ENCODE measurements at regions of chr6 and their contacts with region 1.

Region 1: GRCh38 chr6:35139908-35140655 is 1.1 kb downstream of the TCP11 start:
- DNase-seq: peak in 8 of 9 experiments; percentile 29 to 80 (median 50)
- ATAC-seq: no peak
- H3K4me3 ChIP-seq: no peak overlapping the region
- H3K4me3 Mint-ChIP-seq: peak overlapping the region; percentile 4
- H3K27ac ChIP-seq: no peak overlapping the region
- H3K27ac Mint-ChIP-seq: no peak overlapping the region
- H3K4me1 ChIP-seq: peaks cover 7% of the 10 kb centered on the region
- H3K4me1 Mint-ChIP-seq: peaks cover 11% of the 10 kb centered on the region
- H3K27me3 ChIP-seq: peaks cover 5 to 9% of the 10 kb centered on the region in 2 experiments
- H3K27me3 Mint-ChIP-seq: peaks cover 19% of the 10 kb centered on the region
- CTCF ChIP-seq: peak; percentile 92

Region 2: GRCh38 chr6:34161857-34162515 is 978.1 kb before region 1 on chr6:
- CTCF ChIA-PET with region 1: interaction called, 3 read pairs
- POLR2A ChIA-PET with region 1: no interaction called
- intact Hi-C with region 1: loop called (anchors 2 to 5 kb)
- DNase-seq: no peak
- ATAC-seq: no peak
- H3K4me3 ChIP-seq: no peak overlapping the region
- H3K4me3 Mint-ChIP-seq: no peak overlapping the region
- H3K27ac ChIP-seq: no peak overlapping the region
- H3K27ac Mint-ChIP-seq: no peak overlapping the region
- H3K4me1 ChIP-seq: no peaks in the 10 kb centered on the region
- H3K4me1 Mint-ChIP-seq: no peaks in the 10 kb centered on the region
- H3K27me3 ChIP-seq: no peaks in the 10 kb centered on the region
- H3K27me3 Mint-ChIP-seq: peaks cover 2% of the 10 kb centered on the region
- CTCF ChIP-seq: no peak

Region 3: GRCh38 chr6:34459899-34460593 is 680.0 kb before region 1 on chr6:
- CTCF ChIA-PET with region 1: interaction called, 23 read pairs
- POLR2A ChIA-PET with region 1: no interaction called
- intact Hi-C with region 1: loop called (anchors 1 kb)
- DNase-seq: peak; percentile 12 to 75 (median 48)
- ATAC-seq: peak; percentile 79
- H3K4me3 ChIP-seq: no peak overlapping the region
- H3K4me3 Mint-ChIP-seq: no peak overlapping the region
- H3K27ac ChIP-seq: no peak overlapping the region
- H3K27ac Mint-ChIP-seq: no peak overlapping the region
- H3K4me1 ChIP-seq: no peaks in the 10 kb centered on the region
- H3K4me1 Mint-ChIP-seq: peaks cover 1% of the 10 kb centered on the region
- H3K27me3 ChIP-seq: peaks cover 0 to 7% of the 10 kb centered on the region in 2 experiments
- H3K27me3 Mint-ChIP-seq: peaks cover 10% of the 10 kb centered on the region
- CTCF ChIP-seq: peak; percentile 63

Region 4: DNA sequence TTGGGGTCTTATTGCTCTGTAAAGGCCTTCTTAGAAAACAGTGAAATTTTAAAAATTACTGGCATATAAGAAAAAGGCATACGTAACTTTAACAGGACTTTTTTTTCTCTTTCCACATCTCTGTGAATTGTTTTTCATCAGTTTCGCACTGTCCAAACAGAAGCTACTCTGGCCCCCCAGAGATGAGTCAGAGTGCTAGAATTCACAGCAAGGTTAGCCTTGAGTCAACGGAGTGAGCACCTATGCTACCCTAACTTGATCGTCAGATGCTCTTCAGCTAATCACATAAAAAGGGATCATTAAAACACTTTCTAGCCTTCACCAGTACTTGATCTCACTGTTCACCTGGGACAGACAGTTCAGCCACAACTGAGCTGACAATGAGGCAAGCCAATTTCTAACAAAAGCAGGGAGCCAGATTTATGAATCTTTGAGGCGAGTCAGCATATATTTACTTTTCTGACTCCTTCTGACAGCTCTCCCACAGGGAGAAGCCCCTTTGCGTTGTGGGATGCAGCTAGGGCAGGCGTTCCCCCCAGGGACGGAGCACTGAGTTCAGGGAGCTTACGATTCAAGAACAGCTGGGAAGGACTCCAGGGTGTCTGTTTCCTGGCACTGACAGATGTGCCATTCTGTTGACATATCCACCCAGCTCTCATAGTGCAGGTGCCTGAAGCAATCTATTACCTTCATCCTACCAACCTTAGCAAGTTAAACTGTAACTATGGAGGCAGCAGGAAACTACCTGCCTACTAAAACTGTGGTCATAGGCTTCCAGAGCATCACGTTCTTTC is 537.6 kb before region 1 on chr6:
- CTCF ChIA-PET with region 1: no interaction called
- POLR2A ChIA-PET with region 1: no interaction called
- intact Hi-C with region 1: loop called in 1 of 2 experiments (anchors 10 kb)
- DNase-seq: no peak
- ATAC-seq: no peak
- H3K4me3 ChIP-seq: no peak overlapping the region
- H3K4me3 Mint-ChIP-seq: no peak overlapping the region
- H3K27ac ChIP-seq: no peak overlapping the region
- H3K27ac Mint-ChIP-seq: no peak overlapping the region
- H3K4me1 ChIP-seq: no peaks in the 10 kb centered on the region
- H3K4me1 Mint-ChIP-seq: peaks cover 40% of the 10 kb centered on the region
- H3K27me3 ChIP-seq: no peaks in the 10 kb centered on the region
- H3K27me3 Mint-ChIP-seq: no peaks in the 10 kb centered on the region
- CTCF ChIP-seq: no peak

Region 5: GRCh38 chr6:34867484-34867883 is 272.6 kb before region 1 on chr6:
- CTCF ChIA-PET with region 1: no interaction called
- POLR2A ChIA-PET with region 1: no interaction called
- intact Hi-C with region 1: loop called in 1 of 2 experiments (anchors 5 kb)
- DNase-seq: no peak
- ATAC-seq: no peak
- H3K4me3 ChIP-seq: no peak overlapping the region
- H3K4me3 Mint-ChIP-seq: no peak overlapping the region
- H3K27ac ChIP-seq: no peak overlapping the region
- H3K27ac Mint-ChIP-seq: no peak overlapping the region
- H3K4me1 ChIP-seq: no peaks in the 10 kb centered on the region
- H3K4me1 Mint-ChIP-seq: no peaks in the 10 kb centered on the region
- H3K27me3 ChIP-seq: no peaks in the 10 kb centered on the region
- H3K27me3 Mint-ChIP-seq: no peaks in the 10 kb centered on the region
- CTCF ChIP-seq: no peak

Region 6: DNA sequence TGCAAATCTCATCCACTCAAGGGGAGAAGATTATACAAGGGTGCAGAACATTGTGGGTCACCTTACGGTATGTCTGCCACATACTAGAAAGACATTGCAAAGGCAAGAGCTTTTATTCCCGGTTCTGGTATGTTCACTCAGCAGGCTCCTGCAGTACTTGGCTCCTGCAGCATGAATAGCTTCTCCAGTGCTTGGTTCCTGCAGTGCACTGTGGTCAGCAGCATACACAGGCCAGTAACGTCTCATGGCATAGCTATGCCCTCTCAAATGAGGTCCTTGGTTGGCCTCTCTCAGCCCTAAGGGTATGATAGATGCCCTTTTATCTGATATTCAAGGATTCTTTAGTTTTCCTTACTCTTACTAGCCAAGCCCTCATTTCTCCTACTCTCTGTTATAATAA is 11.6 kb before region 1 on chr6:
- CTCF ChIA-PET with region 1: interaction called, 29 read pairs
- POLR2A ChIA-PET with region 1: no interaction called
- intact Hi-C with region 1: no loop called
- DNase-seq: no peak
- ATAC-seq: no peak
- H3K4me3 ChIP-seq: no peak overlapping the region
- H3K4me3 Mint-ChIP-seq: no peak overlapping the region
- H3K27ac ChIP-seq: no peak overlapping the region
- H3K27ac Mint-ChIP-seq: no peak overlapping the region
- H3K4me1 ChIP-seq: no peaks in the 10 kb centered on the region
- H3K4me1 Mint-ChIP-seq: no peaks in the 10 kb centered on the region
- H3K27me3 ChIP-seq: no peaks in the 10 kb centered on the region
- H3K27me3 Mint-ChIP-seq: peaks cover 12% of the 10 kb centered on the region
- CTCF ChIP-seq: no peak

Measured in CD8-positive, alpha-beta T cell (primary cell).